ENCODE measurements at regions of chr9 and their contacts with region 1.

Region 1: GRCh38 chr9:36328798-36329411 is 70.7 kb upstream of the GNE start:
- DNase-seq: peak; percentile 62
- H3K4me3 ChIP-seq: peak overlapping the region in 1 of 2 experiments; percentile 4; a peak in 1 of 4 replicates
- H3K27ac ChIP-seq: no peak overlapping the region
- H3K4me1 ChIP-seq: no peaks in the 10 kb centered on the region; a peak in 2 of 4 replicates
- H3K27me3 ChIP-seq: no peaks in the 10 kb centered on the region
- CTCF ChIP-seq: peak; percentile 86
- EP300 ChIP-seq: no peak
- RAD21 ChIP-seq: peak; percentile 85

Region 2: DNA sequence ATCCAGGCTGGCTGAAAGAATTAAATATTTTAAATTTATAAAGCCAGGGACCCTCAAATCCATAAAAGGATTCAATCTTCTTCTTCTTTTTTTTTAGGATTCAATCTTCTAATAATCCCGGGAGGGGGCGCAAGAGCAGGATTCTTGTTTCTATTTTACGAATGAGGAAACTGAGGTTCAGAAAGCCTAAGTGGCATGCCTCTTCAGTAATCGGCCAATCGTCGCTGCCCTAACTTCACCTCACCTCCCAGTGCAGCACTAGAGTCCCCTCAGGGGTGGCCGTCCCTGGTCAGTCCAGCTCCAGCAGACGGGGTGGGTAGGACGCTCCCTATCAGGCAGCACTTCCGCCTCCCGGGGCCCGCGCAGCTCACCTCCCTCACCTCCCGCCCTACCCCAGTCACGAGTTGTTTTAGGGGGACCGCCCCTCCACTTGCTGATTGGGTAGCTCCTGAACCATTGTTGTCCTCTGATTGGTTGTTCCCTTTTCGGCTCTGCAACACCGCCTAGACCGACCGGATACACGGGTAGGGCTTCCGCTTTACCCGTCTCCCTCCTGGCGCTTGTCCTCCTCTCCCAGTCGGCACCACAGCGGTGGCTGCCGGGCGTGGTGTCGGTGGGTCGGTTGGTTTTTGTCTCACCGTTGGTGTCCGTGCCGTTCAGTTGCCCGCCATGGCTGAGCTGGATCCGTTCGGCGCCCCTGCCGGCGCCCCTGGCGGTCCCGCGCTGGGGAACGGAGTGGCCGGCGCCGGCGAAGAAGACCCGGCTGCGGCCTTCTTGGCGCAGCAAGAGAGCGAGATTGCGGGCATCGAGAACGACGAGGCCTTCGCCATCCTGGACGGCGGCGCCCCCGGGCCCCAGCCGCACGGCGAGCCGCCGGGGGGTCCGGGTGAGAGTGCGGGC is 138.3 kb before region 1 on chr9 and contains the start of gene CLTA:
- CTCF ChIA-PET with region 1: interaction called, 15 read pairs
- POLR2A ChIA-PET with region 1: interaction called, 3 read pairs
- DNase-seq: peak; percentile 98
- H3K4me3 ChIP-seq: peak within 1 kb of the TSS; percentile 84 to 94
- H3K27ac ChIP-seq: peak within 1 kb of the TSS; percentile 83 to 87
- H3K4me1 ChIP-seq: peaks cover 6 to 27% of the 10 kb centered on the region in 2 experiments
- H3K27me3 ChIP-seq: no peaks in the 10 kb centered on the region
- CTCF ChIP-seq: peak; percentile 77
- EP300 ChIP-seq: peak in 1 of 2 experiments; percentile 42; a peak in 2 of 4 replicates
- RAD21 ChIP-seq: peak; percentile 28
- polyA plus RNA-seq, gene CLTA: 222 and 260 TPM in 2 replicates

Region 3: DNA sequence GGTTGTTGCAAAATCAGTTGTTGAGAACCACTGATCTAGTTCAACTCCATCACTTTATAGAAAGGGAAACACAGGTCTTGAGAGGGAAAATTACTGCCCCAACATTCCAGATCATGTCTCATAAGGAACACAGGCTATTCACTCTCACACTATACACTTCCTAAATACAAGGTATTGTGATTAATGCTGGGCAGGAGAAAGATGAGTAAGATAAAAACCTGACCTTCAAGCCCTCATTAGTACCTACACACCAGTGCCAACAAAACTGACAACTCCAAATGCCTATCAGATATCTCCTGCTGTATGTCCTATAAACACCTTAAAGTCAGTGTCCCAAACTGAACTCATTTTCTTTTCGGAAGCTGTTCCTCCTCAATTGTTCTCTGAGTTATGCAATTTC is 78.8 kb before region 1 on chr9:
- CTCF ChIA-PET with region 1: interaction called, 83 read pairs
- POLR2A ChIA-PET with region 1: no interaction called
- DNase-seq: no peak
- H3K4me3 ChIP-seq: no peak overlapping the region
- H3K27ac ChIP-seq: no peak overlapping the region
- H3K4me1 ChIP-seq: peaks cover 0 to 5% of the 10 kb centered on the region in 2 experiments; a peak in 1 of 4 replicates
- H3K27me3 ChIP-seq: no peaks in the 10 kb centered on the region
- CTCF ChIP-seq: no peak
- EP300 ChIP-seq: no peak
- RAD21 ChIP-seq: no peak

Region 4: DNA sequence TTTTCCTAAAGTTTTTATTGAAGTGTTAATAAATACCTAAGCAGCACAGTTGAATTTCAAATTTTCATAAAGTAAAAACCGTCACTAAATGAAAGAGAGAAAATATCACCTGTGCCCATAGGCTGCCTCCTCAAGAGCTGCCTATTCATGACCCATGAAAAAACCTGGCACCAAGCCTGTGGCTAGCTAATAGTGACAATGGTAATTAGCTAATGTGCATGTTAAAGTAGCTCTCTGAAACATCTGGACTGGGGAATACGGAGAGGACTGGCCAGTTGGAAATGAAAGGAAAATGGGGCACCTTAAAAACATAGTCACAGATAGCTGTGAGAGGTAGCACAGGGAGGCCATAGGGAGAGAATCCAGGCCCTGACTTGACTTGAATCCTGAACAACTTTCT is 65.2 kb before region 1 on chr9:
- CTCF ChIA-PET with region 1: interaction called, 10 read pairs
- POLR2A ChIA-PET with region 1: no interaction called
- DNase-seq: no peak
- H3K4me3 ChIP-seq: no peak overlapping the region
- H3K27ac ChIP-seq: no peak overlapping the region
- H3K4me1 ChIP-seq: peaks cover 0 to 2% of the 10 kb centered on the region in 2 experiments; a peak in 1 of 4 replicates
- H3K27me3 ChIP-seq: no peaks in the 10 kb centered on the region
- CTCF ChIP-seq: no peak
- EP300 ChIP-seq: no peak
- RAD21 ChIP-seq: no peak

Region 5: GRCh38 chr9:36317764-36318163 is 11.1 kb before region 1 on chr9:
- CTCF ChIA-PET with region 1: interaction called, 68 read pairs
- POLR2A ChIA-PET with region 1: no interaction called
- DNase-seq: no peak
- H3K4me3 ChIP-seq: no peak overlapping the region
- H3K27ac ChIP-seq: no peak overlapping the region
- H3K4me1 ChIP-seq: peaks cover 0 to 3% of the 10 kb centered on the region in 2 experiments; a peak in 1 of 4 replicates
- H3K27me3 ChIP-seq: no peaks in the 10 kb centered on the region
- CTCF ChIP-seq: no peak
- EP300 ChIP-seq: no peak
- RAD21 ChIP-seq: no peak

Measured in SK-N-SH (cell line).